ENCODE measurements at regions of chr9 and their contacts with region 1.

Region 1: GRCh38 chr9:6827439-6827838 is 69.7 kb downstream of the KDM4C start:
- DNase-seq: peak; percentile 24 to 60 (median 34)
- ATAC-seq: peak; percentile 80
- H3K4me3 ChIP-seq: no peak overlapping the region
- H3K27ac ChIP-seq: no peak overlapping the region
- H3K4me1 ChIP-seq: no peaks in the 10 kb centered on the region; a peak in 2 of 5 replicates
- H3K27me3 ChIP-seq: no peaks in the 10 kb centered on the region
- CTCF ChIP-seq: peak in 2 of 3 experiments; percentile 50 to 61; a peak in 3 of 6 replicates
- EP300 ChIP-seq: no peak
- POLR2A ChIP-seq: no peak
- RAD21 ChIP-seq: peak; percentile 47 to 70

Region 2: DNA sequence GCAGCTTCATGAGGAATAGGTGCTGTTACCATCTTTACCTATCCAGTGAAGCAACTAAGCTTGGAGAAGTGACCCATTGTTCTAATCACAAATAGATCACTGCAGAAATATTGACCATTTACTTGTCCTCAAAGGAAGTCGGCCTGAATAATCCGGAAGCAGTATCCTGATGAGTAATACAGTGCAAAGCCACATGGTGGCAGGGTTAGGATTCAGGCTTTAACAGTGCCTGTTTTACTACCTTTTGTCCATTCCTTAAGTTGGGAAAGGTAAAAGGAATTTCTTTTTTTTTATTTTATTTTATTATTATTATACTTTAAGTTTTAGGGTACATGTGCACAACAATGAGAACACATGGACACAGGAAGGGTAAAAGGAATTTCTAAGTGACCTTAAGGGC is 266.6 kb after region 1 on chr9:
- CTCF ChIA-PET with region 1: no interaction called
- POLR2A ChIA-PET with region 1: no interaction called
- in situ Hi-C with region 1: no loop called
- intact Hi-C with region 1: no loop called
- DNase-seq: peak in 2 of 4 experiments; percentile 9 to 18
- ATAC-seq: peak; percentile 64; the same call in 2 of the 3 replicates
- H3K4me3 ChIP-seq: no peak overlapping the region
- H3K27ac ChIP-seq: no peak overlapping the region
- H3K4me1 ChIP-seq: no peaks in the 10 kb centered on the region; a peak in 1 of 5 replicates
- H3K27me3 ChIP-seq: no peaks in the 10 kb centered on the region
- CTCF ChIP-seq: peak in 2 of 3 experiments; percentile 19 to 25; a peak in 2 of 6 replicates
- EP300 ChIP-seq: no peak
- POLR2A ChIP-seq: no peak
- RAD21 ChIP-seq: no peak

Region 3: DNA sequence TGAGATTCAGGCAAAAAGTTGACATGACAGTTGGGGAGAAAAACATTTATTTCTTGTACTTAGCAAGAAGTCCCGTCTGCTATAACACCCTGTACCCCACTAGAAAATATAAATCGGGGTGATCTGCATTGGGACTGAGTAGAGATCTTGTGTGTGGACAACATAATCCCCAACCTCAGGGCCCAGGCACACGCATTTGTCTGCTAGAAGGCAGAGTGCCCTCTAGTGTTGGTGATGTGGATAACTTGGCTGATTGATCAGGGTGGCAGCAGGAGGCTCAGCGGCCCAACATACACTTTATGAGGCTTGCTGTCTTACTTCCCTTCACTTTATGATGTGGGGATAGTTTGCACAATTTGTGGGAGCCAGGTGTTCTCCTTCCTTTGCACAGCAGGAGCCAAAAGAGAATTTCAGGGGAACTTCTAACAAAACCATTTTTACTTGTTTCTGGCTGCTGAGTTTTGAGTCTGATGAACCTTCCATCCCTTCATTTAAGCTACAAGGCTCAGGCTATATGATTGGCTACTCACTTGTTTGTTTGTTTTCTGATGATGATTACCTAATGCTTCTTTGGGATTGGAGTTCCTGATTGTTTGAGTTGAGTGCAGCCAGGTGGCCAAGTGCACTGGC is 709.0 kb after region 1 on chr9:
- CTCF ChIA-PET with region 1: no interaction called
- POLR2A ChIA-PET with region 1: interaction called, 3 read pairs
- in situ Hi-C with region 1: no loop called
- intact Hi-C with region 1: loop called (anchors 10 kb)
- DNase-seq: peak; percentile 27 to 45 (median 34)
- ATAC-seq: peak; percentile 81
- H3K4me3 ChIP-seq: no peak overlapping the region
- H3K27ac ChIP-seq: no peak overlapping the region
- H3K4me1 ChIP-seq: no peaks in the 10 kb centered on the region
- H3K27me3 ChIP-seq: no peaks in the 10 kb centered on the region
- CTCF ChIP-seq: peak; percentile 56 to 57 (median 57)
- EP300 ChIP-seq: no peak
- POLR2A ChIP-seq: no peak
- RAD21 ChIP-seq: peak; percentile 32 to 58; a peak in 3 of 4 replicates